Gastrocnemius medialis (tissue), 4 donors: ENCODE measurements at regions of chr12 and their contacts with region 1.

Region 1: DNA sequence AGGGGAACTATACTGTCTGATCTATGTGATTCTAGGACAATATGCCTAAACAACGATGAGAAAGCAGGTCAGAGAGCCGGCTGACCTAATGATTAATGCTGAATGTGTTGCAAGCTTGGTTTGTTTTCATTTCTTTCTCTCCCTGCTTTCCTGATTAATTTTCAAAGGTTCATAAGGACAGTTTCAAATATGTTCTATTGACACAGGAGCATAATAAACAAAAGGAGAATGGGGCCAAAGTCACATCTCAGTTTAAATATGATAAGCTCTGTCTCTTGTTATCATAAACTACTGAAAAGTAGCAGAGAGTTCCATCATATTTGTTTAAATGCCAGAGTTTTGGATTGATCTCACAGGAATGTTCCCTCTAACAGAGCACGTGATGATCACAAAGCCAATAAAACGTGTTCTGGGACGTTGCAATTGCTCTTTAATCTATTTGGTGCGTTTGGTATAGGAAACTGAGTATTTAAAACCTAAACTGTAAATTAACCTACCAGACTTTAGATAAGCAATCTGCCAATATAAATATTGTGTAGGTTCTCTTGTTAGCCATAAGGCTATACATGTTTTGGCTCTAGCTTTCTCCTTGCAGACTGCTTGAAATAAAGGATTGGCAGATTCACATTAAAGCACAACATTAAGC is 3.7 kb upstream of the HSD17B6 start:
- DNase-seq: no peak
- ATAC-seq: no peak
- H3K4me3 ChIP-seq: no peak overlapping the region
- H3K27ac ChIP-seq: no peak overlapping the region
- H3K4me1 ChIP-seq: no peaks in the 10 kb centered on the region
- H3K27me3 ChIP-seq: no peaks in the 10 kb centered on the region
- CTCF ChIP-seq: no peak
- POLR2A ChIP-seq: no peak

Region 2: DNA sequence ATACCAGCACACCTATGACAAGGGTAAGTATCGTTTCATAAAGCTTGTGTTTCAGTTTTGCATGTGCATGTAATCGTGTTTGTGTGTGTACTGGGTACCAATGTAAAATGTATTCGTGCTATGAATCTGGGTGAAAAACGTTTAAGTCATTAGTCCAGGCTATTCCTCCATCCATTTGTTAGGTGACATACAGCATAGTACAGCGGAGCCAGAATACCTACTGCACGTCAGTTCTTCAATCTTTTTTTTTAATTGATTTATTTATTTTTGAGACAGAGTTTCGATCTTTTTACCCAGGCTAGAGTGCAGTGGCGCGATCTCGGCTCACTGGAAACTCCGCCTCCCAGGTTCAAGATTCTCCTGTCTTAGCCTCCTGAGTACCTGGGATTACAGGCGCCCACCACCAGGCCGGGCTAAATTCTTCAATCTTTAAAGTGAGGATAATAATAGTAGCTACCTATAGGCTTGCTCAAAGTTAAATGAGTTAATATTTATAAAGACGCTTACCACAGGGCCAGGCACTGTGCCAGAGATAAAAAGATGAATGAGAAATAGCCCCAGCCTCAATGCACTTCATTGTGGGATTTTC is 718.3 kb before region 1 on chr12:
- in situ Hi-C with region 1: no loop called
- intact Hi-C with region 1: no loop called
- DNase-seq: no peak
- ATAC-seq: no peak
- H3K4me3 ChIP-seq: peak overlapping the region; percentile 66 to 94 (median 86)
- H3K27ac ChIP-seq: peak overlapping the region; percentile 87 to 98 (median 94)
- H3K4me1 ChIP-seq: peaks cover 15 to 19% of the 10 kb centered on the region in 2 donors
- H3K27me3 ChIP-seq: no peaks in the 10 kb centered on the region
- CTCF ChIP-seq: peak in 1 of 5 experiments; percentile 7
- POLR2A ChIP-seq: no peak

Region 3: DNA sequence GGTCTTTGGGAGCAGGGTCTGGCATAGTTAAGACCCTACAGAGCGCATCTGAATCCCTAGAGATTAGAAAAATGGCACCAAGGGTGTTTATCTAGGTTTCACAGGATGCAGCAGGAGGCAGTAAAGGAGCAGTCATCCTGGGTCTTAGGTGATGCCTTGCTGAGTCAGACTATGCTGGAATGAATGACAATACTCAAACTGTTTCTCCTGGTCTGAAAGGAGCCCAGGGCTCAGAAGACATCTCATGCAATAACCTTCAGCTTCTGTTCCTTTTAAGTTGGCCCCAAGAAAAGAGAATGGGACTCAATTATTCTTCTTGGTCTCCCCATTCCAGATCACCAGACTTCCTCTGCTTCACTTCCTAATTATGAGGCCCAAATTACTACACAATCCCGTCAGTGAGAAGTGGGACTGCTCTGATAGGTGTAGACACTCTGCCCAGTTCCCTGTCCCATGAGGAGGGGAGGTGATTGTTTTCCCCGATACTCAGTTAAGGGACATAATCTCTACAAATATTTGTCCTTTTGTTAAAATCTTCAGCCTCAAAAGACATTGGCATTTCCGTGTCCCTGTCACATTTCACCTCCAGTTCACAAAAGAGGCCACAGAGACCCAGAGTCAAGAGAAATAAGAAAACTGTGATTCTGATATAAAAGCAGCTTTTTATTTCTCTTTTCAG is 381.9 kb before region 1 on chr12:
- in situ Hi-C with region 1: no loop called
- intact Hi-C with region 1: no loop called
- DNase-seq: no peak
- ATAC-seq: no peak
- H3K4me3 ChIP-seq: no peak overlapping the region
- H3K27ac ChIP-seq: no peak overlapping the region
- H3K4me1 ChIP-seq: no peaks in the 10 kb centered on the region
- H3K27me3 ChIP-seq: no peaks in the 10 kb centered on the region
- CTCF ChIP-seq: no peak
- POLR2A ChIP-seq: no peak

Region 4: DNA sequence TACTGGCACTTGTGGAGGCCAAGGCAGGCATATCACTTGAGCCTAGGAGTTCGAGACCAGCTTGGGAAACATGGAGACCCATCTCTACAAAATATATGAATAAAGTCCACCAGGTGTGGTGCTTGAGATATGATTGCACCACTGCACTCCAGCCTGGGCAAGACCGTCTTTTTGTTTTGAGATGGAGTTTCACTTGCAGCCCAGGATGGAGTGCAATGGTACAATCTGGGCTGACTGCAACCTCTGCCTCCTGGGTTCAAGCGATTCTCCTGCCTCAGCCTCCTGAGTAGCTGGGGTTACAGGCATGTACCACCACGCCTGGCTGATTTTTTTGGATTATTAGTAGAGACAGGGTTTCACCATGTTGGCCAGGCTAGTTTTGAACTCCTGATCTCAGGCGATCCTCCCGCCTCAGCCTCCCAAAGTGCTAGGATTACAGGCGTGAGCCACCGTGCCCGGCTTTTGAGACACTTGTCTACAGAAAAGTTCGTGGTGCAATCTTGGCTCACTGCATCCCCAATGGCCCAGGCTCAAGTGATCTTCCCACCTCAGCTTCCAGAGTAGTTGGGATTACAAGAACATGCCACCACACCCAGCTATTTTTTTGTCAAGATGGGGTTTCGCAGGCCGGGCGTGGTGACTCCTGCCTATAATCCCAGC is 97.3 kb before region 1 on chr12:
- in situ Hi-C with region 1: no loop called
- intact Hi-C with region 1: no loop called
- DNase-seq: no peak
- ATAC-seq: no peak
- H3K4me3 ChIP-seq: no peak overlapping the region
- H3K27ac ChIP-seq: no peak overlapping the region
- H3K4me1 ChIP-seq: no peaks in the 10 kb centered on the region
- H3K27me3 ChIP-seq: no peaks in the 10 kb centered on the region
- CTCF ChIP-seq: no peak
- POLR2A ChIP-seq: no peak

Region 5: GRCh38 chr12:56987551-56988053 is 228.2 kb after region 1 on chr12:
- in situ Hi-C with region 1: loop called (anchors 5 kb)
- intact Hi-C with region 1: loop called (anchors 1 kb)
- DNase-seq: peak; percentile 42 to 63
- ATAC-seq: peak; percentile 58 to 73
- H3K4me3 ChIP-seq: no peak overlapping the region
- H3K27ac ChIP-seq: no peak overlapping the region
- H3K4me1 ChIP-seq: peaks cover 0 to 6% of the 10 kb centered on the region in 2 donors
- H3K27me3 ChIP-seq: no peaks in the 10 kb centered on the region
- CTCF ChIP-seq: peak; percentile 76 to 92 (median 88)
- POLR2A ChIP-seq: no peak

Region 6: GRCh38 chr12:57063991-57064685 is 304.8 kb after region 1 on chr12:
- in situ Hi-C with region 1: no loop called
- intact Hi-C with region 1: loop called (anchors 5 kb)
- DNase-seq: no peak
- ATAC-seq: no peak
- H3K4me3 ChIP-seq: no peak overlapping the region
- H3K27ac ChIP-seq: no peak overlapping the region
- H3K4me1 ChIP-seq: no peaks in the 10 kb centered on the region
- H3K27me3 ChIP-seq: no peaks in the 10 kb centered on the region
- CTCF ChIP-seq: no peak
- POLR2A ChIP-seq: no peak

Region 7: DNA sequence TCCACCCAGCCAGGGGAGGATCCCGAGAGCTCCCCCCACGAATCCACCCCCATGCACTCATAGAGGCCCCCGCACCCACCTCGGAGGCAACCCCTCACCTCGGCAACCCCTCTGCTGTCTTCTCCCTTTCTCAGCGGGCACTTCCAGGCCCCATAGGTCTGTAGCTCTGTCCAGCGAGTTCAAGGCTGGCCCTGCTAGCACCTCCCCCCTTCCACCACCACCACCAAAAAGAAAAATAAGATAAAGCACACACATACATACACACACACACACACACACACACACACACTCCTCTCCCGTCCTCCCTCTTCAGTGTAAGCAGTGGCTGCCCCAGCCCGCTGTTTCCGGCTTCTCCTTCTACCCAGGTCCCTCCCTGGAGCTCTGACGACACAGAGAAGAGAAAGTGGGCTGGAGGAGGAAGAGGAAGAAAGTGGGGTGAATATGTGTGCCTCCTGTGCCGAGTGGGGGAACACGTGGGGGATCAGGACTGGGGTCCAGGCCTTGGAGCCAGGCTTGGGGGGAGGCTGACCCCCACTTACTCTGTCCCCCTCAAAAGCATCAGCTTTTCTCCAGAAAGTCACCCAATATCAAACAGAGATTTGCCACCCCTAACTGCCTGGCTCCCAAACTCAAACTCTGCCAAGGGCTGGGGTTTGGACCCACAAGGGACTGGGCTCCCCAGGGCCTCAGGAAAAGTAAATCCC is 351.8 kb after region 1 on chr12 and contains the start of gene STAT6:
- in situ Hi-C with region 1: no loop called
- intact Hi-C with region 1: loop called (anchors 5 kb)
- DNase-seq: peak in 1 of 2 donors; percentile 73
- ATAC-seq: peak; percentile 55 to 60
- H3K4me3 ChIP-seq: peak within 1 kb of the TSS; percentile 58 to 68 (median 64)
- H3K27ac ChIP-seq: peak within 1 kb of the TSS; percentile 87 to 94 (median 93)
- H3K4me1 ChIP-seq: peaks cover 9 to 15% of the 10 kb centered on the region in 2 donors
- H3K27me3 ChIP-seq: no peaks in the 10 kb centered on the region
- CTCF ChIP-seq: no peak
- POLR2A ChIP-seq: peak; percentile 39 to 57
- total RNA-seq, gene STAT6: 12.5 to 17.4 (median 14.4) TPM